ENCODE measurements at regions of chr7 and their contacts with region 1.

Region 1: DNA sequence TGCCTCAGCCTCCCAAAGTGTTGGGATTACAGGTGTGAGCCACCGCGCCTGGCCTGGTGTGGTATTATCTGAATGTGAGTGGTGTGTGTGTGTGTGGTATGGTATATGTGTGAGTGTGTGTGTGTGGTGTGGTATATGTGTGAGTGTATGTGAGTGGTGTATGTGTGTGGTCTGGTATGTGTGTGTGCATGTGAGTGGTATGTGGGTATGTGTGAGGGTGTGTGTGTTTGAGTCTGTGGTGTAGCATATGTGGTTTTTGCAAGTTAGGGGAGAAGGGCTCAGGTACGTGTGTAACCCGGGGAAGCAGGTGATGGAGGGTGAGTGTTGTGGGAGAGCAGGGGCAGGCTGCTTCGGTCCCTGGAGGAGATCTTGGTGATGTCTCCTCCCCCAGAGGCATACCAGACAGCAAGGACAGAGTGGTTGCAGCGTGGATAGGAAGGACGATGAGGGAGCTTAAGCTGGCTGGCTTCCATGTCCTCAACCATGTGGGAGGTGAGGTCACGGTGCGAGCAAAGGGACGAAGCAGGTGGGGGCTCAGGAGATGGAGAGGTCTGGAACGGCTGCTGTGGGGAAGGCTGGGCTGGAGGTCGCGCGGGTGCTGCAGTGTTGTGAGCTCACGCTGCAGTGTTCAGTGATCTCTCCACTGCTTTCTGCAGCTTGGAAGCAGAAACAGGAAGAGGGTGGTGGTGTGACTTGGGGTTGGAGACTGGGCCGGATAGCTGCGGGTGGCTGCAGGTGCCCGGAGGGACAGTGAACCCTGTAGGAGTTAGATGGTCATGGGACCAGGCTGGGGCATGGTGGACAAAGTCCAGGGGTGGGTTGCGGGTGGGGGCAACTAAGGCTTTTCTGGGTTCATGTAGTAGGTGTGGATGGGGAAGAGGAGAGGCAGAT is 5.0 kb downstream of the ZYX start:
- DNase-seq: peak; percentile 63
- ATAC-seq: peak; percentile 72
- H3K4me3 Mint-ChIP-seq: no peak overlapping the region
- H3K27ac Mint-ChIP-seq: no peak overlapping the region
- H3K4me1 Mint-ChIP-seq: peaks cover 16% of the 10 kb centered on the region
- H3K27me3 Mint-ChIP-seq: no peaks in the 10 kb centered on the region

Region 2: GRCh38 chr7:143240291-143241168 is 145.6 kb before region 1 on chr7:
- POLR2A ChIA-PET with region 1: interaction called, 12 read pairs
- DNase-seq: peak; percentile 58
- ATAC-seq: peak; percentile 72
- H3K4me3 Mint-ChIP-seq: no peak overlapping the region
- H3K27ac Mint-ChIP-seq: no peak overlapping the region
- H3K4me1 Mint-ChIP-seq: peaks cover 25% of the 10 kb centered on the region
- H3K27me3 Mint-ChIP-seq: peaks cover 10% of the 10 kb centered on the region

Region 3: GRCh38 chr7:143345428-143345900 is 40.7 kb before region 1 on chr7:
- POLR2A ChIA-PET with region 1: no interaction called
- DNase-seq: peak; percentile 71
- ATAC-seq: peak; percentile 100
- H3K4me3 Mint-ChIP-seq: peak overlapping the region; percentile 73
- H3K27ac Mint-ChIP-seq: peak overlapping the region; percentile 69
- H3K4me1 Mint-ChIP-seq: peaks cover 9% of the 10 kb centered on the region
- H3K27me3 Mint-ChIP-seq: peaks cover 36% of the 10 kb centered on the region

Region 4: DNA sequence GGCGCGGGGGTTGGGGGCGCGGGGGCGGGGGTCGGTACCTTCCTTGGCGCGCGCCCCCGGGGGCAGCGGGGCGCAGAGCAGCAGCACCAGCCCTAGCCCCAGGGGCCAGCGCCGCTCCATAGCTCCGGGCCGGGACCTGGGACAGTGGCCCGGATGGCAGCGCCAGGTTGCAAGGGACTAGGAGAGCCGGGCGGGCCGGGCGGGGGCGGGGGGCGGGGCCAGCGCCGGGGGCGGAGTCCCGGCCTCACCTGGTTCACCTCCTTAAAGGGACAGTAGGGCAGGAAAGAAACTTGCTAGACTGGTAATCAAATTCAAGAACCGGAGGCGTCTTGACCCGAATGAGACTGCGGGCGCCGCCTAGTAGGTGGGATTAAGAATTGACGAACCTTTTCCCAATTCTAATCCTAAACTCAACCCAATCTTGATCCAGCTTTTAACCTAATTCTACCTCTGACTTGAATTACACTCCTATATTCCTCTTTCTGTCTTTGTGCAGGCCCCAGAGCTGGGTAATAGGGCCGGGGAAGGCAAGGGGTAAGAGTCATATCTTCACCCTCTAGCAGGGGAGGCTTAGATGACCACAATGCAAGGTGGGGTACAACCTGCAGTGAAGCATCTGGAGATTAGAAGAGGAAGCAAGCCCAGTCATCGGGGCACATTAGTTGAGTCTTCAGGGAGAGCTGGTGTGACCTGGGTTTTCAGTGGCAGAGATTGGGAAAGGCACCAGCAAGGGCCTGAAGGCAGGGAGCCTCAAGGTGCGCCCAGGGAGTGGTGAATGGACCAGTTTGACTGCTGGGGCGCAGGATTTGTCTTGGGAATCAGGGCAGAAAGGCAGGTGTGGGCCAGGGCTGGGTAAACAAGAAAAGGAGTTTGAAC is 22.8 kb after region 1 on chr7 and contains the start of gene EPHA1:
- POLR2A ChIA-PET with region 1: interaction called, 44 read pairs
- DNase-seq: peak; percentile 45
- ATAC-seq: peak; percentile 71
- H3K4me3 Mint-ChIP-seq: peak within 1 kb of the TSS; percentile 89
- H3K27ac Mint-ChIP-seq: peak within 1 kb of the TSS; percentile 87
- H3K4me1 Mint-ChIP-seq: peaks cover 33% of the 10 kb centered on the region
- H3K27me3 Mint-ChIP-seq: peaks cover 2% of the 10 kb centered on the region
- total RNA-seq, gene EPHA1: 27.3 to 28.2 TPM

Region 5: DNA sequence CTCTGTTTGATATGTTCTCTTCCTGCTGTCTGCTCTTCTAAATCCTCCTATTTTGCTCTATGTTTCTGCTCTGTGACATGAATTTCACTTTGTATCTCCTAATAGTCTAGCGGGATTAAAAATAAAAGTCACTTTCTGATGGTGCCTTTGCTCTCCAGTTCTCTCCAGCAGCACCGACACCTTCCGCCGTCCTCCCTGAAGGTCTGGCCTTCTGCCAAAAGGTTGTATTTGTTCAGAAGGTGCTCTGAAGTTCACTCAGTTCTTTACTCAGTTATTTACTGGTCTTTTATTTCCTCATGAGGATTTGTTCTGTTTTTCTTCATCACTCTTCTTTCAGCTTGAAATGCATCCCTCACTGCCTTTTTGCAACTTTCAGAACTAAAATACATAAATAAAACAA is 33.7 kb after region 1 on chr7:
- POLR2A ChIA-PET with region 1: no interaction called
- DNase-seq: no peak
- ATAC-seq: no peak
- H3K4me3 Mint-ChIP-seq: no peak overlapping the region
- H3K27ac Mint-ChIP-seq: no peak overlapping the region
- H3K4me1 Mint-ChIP-seq: peaks cover 4% of the 10 kb centered on the region
- H3K27me3 Mint-ChIP-seq: no peaks in the 10 kb centered on the region

Region 6: GRCh38 chr7:143436325-143436946 is 50.3 kb after region 1 on chr7:
- POLR2A ChIA-PET with region 1: no interaction called
- DNase-seq: no peak
- ATAC-seq: no peak
- H3K4me3 Mint-ChIP-seq: no peak overlapping the region
- H3K27ac Mint-ChIP-seq: no peak overlapping the region
- H3K4me1 Mint-ChIP-seq: peaks cover 13% of the 10 kb centered on the region
- H3K27me3 Mint-ChIP-seq: peaks cover 2% of the 10 kb centered on the region

Measured in activated naive CD8-positive, alpha-beta T cell treated with anti-CD3 and anti-CD28 coated beads, Interleukin-2, amount 10 ng/mL, durations not matched to agents 7 days and 5 days (primary cell).